ENCODE measurements at regions of chr2 and their contacts with region 1.

Region 1: GRCh38 chr2:138787053-138787666 is 7.0 kb upstream of the NXPH2 start:
- DNase-seq: no peak
- H3K4me3 ChIP-seq: no peak overlapping the region
- H3K27ac ChIP-seq: no peak overlapping the region
- H3K4me1 ChIP-seq: peaks cover 0 to under 1% (median 0%) of the 10 kb centered on the region in 4 experiments; a peak in 1 of 7 replicates
- H3K27me3 ChIP-seq: peaks cover 0 to 3% (median 0%) of the 10 kb centered on the region in 4 experiments; a peak in 1 of 7 replicates
- CTCF ChIP-seq: peak in 2 of 3 experiments; percentile 50 to 59; a peak in 2 of 4 replicates
- EP300 ChIP-seq: no peak
- POLR2A ChIP-seq: no peak
- RAD21 ChIP-seq: peak; percentile 78 to 81

Region 2: DNA sequence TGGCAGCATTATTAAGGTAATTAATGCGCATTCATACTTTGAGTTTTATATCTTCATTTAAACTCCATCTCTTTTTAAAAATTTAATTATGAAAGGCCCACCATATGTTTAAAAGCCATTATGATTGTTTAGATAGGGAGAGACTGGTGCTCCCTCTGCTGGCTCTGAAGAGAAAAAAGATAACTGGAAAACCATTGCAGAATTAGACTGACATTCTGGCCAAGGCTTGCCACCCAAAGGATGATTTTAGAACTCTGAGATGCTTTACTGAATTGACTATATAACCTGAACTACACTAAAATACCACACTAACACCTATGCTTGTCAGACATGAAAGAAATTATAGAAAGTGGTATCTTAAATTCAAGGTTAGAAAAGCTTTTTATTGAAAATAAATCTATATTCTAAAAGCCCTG is 413.2 kb before region 1 on chr2:
- CTCF ChIA-PET with region 1: interaction called, 11 read pairs
- POLR2A ChIA-PET with region 1: no interaction called
- DNase-seq: no peak
- H3K4me3 ChIP-seq: no peak overlapping the region
- H3K27ac ChIP-seq: no peak overlapping the region
- H3K4me1 ChIP-seq: no peaks in the 10 kb centered on the region
- H3K27me3 ChIP-seq: no peaks in the 10 kb centered on the region
- CTCF ChIP-seq: peak in 2 of 3 experiments; percentile 52 to 68; a peak in 3 of 4 replicates
- EP300 ChIP-seq: no peak
- POLR2A ChIP-seq: no peak
- RAD21 ChIP-seq: peak; percentile 78 to 80

Region 3: DNA sequence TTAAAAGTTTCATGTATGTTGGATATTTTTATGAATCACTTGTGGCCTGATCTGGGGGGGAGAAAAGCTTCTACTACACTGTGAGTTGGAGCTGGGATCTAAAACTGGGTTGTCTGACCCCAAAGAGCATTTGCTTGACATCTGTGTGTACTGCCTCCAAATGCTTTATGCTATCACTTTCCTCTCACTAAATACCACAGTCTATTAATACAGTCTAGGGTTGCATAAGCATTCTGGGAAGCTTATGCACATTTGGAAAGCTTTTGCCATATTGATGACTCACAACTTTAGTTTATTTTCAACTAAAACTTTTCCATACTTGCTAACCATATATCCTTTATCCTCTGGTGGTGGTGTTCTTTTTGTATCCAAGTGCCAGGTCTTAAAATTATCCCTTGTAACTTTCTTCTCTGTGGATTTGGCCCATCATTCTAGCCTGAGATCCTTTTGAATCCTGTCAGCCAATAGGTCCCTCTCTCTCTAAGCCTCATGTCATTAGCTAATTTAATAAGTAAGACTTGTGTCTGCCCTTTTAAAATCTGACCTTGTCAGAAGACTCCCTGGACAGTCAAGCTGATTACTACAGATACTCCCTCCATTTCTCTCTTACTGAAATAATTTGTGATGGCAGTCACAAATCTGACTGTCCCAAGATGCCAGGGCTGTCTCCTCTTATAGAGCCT is 79.6 kb before region 1 on chr2:
- CTCF ChIA-PET with region 1: interaction called, 16 read pairs
- POLR2A ChIA-PET with region 1: no interaction called
- DNase-seq: no peak
- H3K4me3 ChIP-seq: no peak overlapping the region
- H3K27ac ChIP-seq: no peak overlapping the region
- H3K4me1 ChIP-seq: no peaks in the 10 kb centered on the region
- H3K27me3 ChIP-seq: no peaks in the 10 kb centered on the region
- CTCF ChIP-seq: no peak
- EP300 ChIP-seq: no peak
- POLR2A ChIP-seq: no peak
- RAD21 ChIP-seq: no peak

Region 4: GRCh38 chr2:138730497-138731030 is 56.6 kb before region 1 on chr2:
- CTCF ChIA-PET with region 1: interaction called, 20 read pairs
- POLR2A ChIA-PET with region 1: no interaction called
- DNase-seq: no peak
- H3K4me3 ChIP-seq: no peak overlapping the region
- H3K27ac ChIP-seq: no peak overlapping the region
- H3K4me1 ChIP-seq: no peaks in the 10 kb centered on the region; a peak in 1 of 7 replicates
- H3K27me3 ChIP-seq: no peaks in the 10 kb centered on the region
- CTCF ChIP-seq: no peak
- EP300 ChIP-seq: no peak
- POLR2A ChIP-seq: no peak
- RAD21 ChIP-seq: no peak

Region 5: DNA sequence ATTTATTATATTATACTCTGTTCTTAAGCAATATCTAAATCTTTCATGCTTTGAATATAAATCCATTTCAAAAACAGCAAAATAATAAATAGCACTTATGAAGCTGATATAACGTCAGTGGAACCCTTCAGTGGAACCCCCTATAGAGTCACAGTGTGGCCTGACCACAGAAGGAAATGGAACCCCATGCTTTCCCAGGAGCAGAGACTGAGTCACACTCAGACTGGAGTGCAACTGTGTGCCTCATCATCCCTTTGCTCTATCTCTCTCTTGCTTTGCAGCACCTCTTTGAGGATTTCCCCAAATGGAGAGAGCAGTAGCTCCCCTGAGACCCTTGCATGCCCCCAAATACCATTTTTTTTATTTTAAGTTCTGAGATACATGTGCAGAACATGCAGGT is 20.1 kb before region 1 on chr2:
- CTCF ChIA-PET with region 1: interaction called, 14 read pairs
- POLR2A ChIA-PET with region 1: no interaction called
- DNase-seq: no peak
- H3K4me3 ChIP-seq: no peak overlapping the region
- H3K27ac ChIP-seq: no peak overlapping the region
- H3K4me1 ChIP-seq: peaks cover 2 to 17% (median 8%) of the 10 kb centered on the region in 4 experiments; a peak in 3 of 7 replicates
- H3K27me3 ChIP-seq: no peaks in the 10 kb centered on the region
- CTCF ChIP-seq: no peak
- EP300 ChIP-seq: no peak
- POLR2A ChIP-seq: no peak
- RAD21 ChIP-seq: no peak

Region 6: DNA sequence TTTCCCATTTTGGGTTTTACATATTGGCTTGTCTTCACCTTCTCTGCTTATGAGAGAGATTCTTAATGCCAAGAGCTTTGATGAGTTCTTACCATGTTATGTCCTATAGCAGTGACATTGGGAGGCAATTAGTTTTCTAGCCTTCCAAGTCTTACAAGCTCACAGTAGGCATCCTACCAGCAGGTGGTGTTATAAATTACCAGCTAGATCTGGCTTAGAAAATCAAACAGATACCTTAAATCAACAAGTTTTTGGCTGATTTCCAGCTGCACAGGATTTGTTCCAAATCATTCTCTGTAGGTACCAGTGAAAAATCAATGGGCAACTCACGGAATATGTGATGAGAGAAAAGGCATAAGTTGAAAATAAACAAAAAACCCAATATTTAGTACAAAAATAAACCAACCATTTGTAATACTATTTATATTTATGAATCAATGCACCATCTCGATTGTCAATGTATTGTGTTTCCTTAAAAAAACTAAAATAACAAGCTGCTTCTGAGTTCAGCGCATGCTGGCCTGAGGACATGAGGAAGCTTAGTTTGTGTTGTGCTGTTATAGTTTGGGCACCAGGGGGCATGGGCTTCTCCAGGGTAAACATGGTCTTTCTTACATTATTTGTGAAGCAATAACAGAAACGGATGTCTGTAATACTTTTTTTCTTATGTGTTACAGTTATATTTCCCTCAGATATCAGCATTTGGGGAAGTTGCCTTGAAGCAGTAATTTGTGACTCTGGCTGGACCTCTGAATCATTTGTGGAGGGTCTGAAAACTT is 27.1 kb after region 1 on chr2:
- CTCF ChIA-PET with region 1: interaction called, 24 read pairs
- POLR2A ChIA-PET with region 1: no interaction called
- DNase-seq: no peak
- H3K4me3 ChIP-seq: no peak overlapping the region
- H3K27ac ChIP-seq: no peak overlapping the region
- H3K4me1 ChIP-seq: peaks cover 0 to 4% (median 0%) of the 10 kb centered on the region in 4 experiments; a peak in 2 of 7 replicates
- H3K27me3 ChIP-seq: no peaks in the 10 kb centered on the region
- CTCF ChIP-seq: peak in 2 of 3 experiments; percentile 48 to 70; a peak in 3 of 4 replicates
- EP300 ChIP-seq: no peak
- POLR2A ChIP-seq: no peak
- RAD21 ChIP-seq: peak in 1 of 2 experiments; percentile 38; a peak in 2 of 4 replicates

Measured in H1 (cell line).